Activated naive CD4-positive, alpha-beta T cell treated with anti-CD3 and anti-CD28 coated beads for 36 hours (primary cell): ENCODE measurements at regions of chr3 and their contacts with region 1.

Region 1: GRCh38 chr3:24680214-24680967 is 185.7 kb upstream of the THRB start:
- DNase-seq: peak; percentile 73
- H3K4me3 Mint-ChIP-seq: no peak overlapping the region
- H3K27ac Mint-ChIP-seq: no peak overlapping the region
- H3K4me1 Mint-ChIP-seq: peaks cover 6% of the 10 kb centered on the region
- H3K27me3 Mint-ChIP-seq: peaks cover 34% of the 10 kb centered on the region

Region 2: DNA sequence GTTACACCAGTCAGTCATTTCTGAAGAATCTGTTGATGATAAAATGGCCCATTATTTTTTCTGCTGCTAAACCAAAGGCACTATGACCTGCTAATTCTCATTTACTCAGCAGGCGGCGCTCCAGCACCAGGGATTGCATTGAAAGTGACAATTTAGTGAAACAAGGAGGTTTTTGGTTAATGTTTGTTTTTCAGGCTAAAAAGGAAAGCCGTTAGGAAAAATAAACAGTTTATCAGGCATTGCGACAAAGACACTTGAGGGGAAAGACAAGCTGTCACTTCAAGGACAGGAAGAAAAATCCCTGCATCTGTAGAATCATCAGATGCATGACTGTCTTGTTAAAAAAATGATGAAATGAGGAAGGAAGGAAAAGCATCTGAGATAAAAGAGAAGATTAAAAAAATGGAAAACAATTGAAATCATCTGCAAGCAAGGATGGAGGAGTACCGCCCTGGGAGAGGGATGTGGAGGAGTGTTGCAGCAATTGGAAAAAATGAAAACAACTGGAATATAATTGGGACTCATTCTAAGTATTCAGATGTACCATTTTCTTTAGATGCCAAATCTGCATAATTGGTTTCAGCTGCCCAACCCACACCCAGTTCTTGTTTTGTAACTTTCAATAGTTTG is 681.3 kb before region 1 on chr3:
- CTCF ChIA-PET with region 1: interaction called, 3 read pairs
- intact Hi-C with region 1: loop called (anchors 2 kb)
- DNase-seq: peak; percentile 88
- H3K4me3 Mint-ChIP-seq: no peak overlapping the region
- H3K27ac Mint-ChIP-seq: no peak overlapping the region
- H3K4me1 Mint-ChIP-seq: peaks cover 8% of the 10 kb centered on the region
- H3K27me3 Mint-ChIP-seq: peaks cover 8% of the 10 kb centered on the region

Region 3: DNA sequence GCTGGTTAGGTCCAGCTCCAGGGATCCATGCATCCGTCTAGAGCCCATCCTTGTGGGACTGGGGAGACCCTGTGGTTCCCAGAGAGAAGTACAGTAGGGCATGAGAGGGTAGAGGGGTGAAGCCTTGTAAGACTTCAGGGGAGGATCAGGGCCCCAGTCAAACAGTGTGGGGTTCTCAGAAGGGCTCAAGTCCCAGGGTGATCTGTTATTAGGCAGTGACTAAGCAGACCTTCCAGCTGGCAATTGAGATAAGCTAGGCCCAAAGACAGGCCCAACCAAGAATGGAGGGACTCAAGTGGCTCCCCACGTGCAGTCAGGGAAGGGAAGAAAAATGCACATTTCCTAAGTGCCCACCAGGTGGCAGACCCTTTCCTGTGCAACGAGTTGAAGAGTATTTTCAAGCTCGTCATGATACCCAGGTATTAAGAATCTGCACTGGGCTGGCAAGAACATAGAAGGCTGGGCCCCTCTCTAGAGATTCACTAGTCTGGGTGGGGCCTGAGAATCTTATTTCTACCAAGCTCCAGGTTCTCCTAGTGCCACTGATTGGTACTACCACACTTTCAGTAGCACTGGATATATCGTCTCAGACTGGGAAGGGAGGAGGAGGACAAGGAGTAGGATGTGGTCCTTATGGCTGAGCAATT is 494.5 kb before region 1 on chr3:
- CTCF ChIA-PET with region 1: no interaction called
- intact Hi-C with region 1: loop called (anchors 2 kb)
- DNase-seq: peak; percentile 46
- H3K4me3 Mint-ChIP-seq: no peak overlapping the region
- H3K27ac Mint-ChIP-seq: no peak overlapping the region
- H3K4me1 Mint-ChIP-seq: no peaks in the 10 kb centered on the region
- H3K27me3 Mint-ChIP-seq: peaks cover 2% of the 10 kb centered on the region

Region 4: DNA sequence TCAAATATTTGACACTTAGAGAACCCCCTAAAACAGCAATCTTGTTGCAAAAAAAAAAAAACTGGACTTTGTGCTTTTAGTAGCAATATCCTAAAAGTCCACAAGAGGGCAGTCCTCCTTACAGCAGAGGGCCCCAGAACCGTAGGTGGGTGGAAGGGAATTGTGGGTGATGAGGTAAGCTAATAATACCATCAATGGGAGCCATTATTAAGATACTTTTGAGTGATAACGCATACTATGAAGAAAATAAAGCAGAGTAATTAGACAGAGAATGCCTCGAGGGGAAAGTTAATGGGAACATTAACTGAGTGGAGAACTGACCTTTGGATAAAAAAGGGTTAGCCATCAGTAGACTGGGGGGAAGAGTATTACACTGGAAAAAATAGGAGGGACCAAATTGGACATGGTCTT is 415.6 kb before region 1 on chr3:
- CTCF ChIA-PET with region 1: no interaction called
- intact Hi-C with region 1: loop called (anchors 1 kb)
- DNase-seq: no peak
- H3K4me3 Mint-ChIP-seq: no peak overlapping the region
- H3K27ac Mint-ChIP-seq: no peak overlapping the region
- H3K4me1 Mint-ChIP-seq: no peaks in the 10 kb centered on the region
- H3K27me3 Mint-ChIP-seq: peaks cover 7% of the 10 kb centered on the region

Region 5: DNA sequence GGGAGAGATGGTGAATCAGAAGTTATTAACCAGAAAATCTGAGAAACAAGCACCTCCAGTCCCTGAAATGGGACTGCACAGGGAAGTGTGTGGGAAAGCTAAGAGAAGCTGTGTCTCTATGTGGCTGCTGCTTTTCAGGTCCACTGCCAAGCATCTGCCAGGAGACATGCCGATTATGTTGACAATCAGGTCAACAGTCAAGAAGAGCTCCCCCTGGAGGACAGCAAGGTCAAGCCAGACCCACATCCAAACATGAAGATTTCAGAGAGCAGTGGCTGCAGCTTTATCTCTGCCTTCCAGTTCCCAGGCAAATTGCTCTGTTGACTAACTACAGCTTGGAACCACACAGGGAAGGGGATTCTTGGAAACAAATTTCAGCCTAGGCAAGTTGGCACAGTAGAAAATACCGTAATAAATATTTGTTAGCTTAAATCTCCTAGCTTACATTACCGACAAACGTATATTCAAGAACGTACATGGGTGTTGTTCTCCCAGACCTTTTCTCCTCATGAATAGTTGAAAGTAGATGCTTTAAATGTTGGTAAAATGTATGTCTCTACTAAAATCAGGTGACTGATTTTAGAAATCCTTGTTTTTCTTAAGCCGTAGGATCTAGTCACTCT is 353.1 kb after region 1 on chr3:
- CTCF ChIA-PET with region 1: interaction called, 5 read pairs
- intact Hi-C with region 1: loop called (anchors 1 kb)
- DNase-seq: peak; percentile 34
- H3K4me3 Mint-ChIP-seq: no peak overlapping the region
- H3K27ac Mint-ChIP-seq: no peak overlapping the region
- H3K4me1 Mint-ChIP-seq: no peaks in the 10 kb centered on the region
- H3K27me3 Mint-ChIP-seq: no peaks in the 10 kb centered on the region